CD4-positive, alpha-beta memory T cell (primary cell): ENCODE measurements at regions of chr6 and their contacts with region 1.

Region 1: GRCh38 chr6:26568601-26569432 is 27.9 kb upstream of the ABT1 start:
- DNase-seq: peak; percentile 96 to 98 (median 97)
- H3K4me3 ChIP-seq: peak overlapping the region; percentile 74 to 82
- H3K4me3 Mint-ChIP-seq: peak overlapping the region; percentile 94 to 99 (median 96)
- H3K27ac ChIP-seq: peak overlapping the region; percentile 62
- H3K27ac Mint-ChIP-seq: peak overlapping the region; percentile 92 to 100 (median 98)
- H3K4me1 ChIP-seq: peaks cover 9% of the 10 kb centered on the region
- H3K4me1 Mint-ChIP-seq: peaks cover 17 to 34% (median 23%) of the 10 kb centered on the region in 4 donors
- H3K27me3 ChIP-seq: no peaks in the 10 kb centered on the region
- H3K27me3 Mint-ChIP-seq: peaks cover 0 to 10% of the 10 kb centered on the region in 2 donors

Region 2: GRCh38 chr6:26175428-26176181 is 393.2 kb before region 1 on chr6:
- CTCF ChIA-PET with region 1: interaction called, 8 read pairs
- POLR2A ChIA-PET with region 1: interaction called, 11 read pairs
- intact Hi-C with region 1: loop called (anchors 2 kb)
- DNase-seq: peak; percentile 50 to 73 (median 70)
- H3K4me3 ChIP-seq: no peak overlapping the region
- H3K4me3 Mint-ChIP-seq: peak overlapping the region in 4 of 8 donors; percentile 37 to 70 (median 65)
- H3K27ac ChIP-seq: no peak overlapping the region
- H3K27ac Mint-ChIP-seq: peak overlapping the region; percentile 28 to 89 (median 78)
- H3K4me1 ChIP-seq: peaks cover 37% of the 10 kb centered on the region
- H3K4me1 Mint-ChIP-seq: peaks cover 21 to 40% (median 27%) of the 10 kb centered on the region in 4 donors
- H3K27me3 ChIP-seq: no peaks in the 10 kb centered on the region
- H3K27me3 Mint-ChIP-seq: no peaks in the 10 kb centered on the region

Region 3: DNA sequence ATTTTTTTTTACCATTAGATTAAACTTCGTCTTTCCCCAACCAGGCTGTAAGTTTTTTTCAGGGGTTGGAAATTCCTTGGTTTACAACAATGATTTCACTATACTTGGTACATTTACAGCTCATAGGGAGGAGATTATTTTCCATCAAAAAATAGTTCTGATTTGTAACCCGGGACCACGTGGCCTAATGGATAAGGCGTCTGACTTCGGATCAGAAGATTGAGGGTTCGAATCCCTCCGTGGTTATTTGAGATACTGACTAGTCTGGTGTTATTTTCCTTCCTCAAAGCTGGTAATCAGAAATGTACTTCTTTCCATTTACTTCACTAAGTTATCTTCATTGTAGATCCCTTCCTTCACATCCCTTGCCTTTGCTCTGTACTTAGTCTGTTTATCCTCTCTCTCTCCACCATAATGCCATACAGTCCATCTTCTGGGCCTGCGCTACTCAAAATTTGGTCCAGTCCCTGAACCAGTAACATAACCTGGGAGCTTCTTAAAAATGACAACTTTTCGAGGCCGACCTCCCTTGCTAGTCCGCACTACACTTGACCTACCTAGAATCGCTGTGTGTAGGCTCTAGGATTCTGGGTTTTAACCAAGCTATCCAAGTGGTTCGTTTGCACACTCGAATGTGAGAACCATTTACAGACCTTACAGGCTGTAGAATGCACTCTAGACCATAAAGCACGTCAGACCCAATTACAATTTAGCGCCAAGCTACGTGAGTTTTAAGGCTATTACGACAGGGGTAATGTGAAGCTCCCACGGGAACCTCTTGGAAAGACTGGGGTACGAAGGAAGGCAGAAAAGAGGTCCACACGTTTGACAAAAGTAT is 246.0 kb before region 1 on chr6:
- CTCF ChIA-PET with region 1: interaction called, 8 read pairs
- POLR2A ChIA-PET with region 1: interaction called, 17 read pairs
- intact Hi-C with region 1: no loop called
- DNase-seq: peak; percentile 75 to 80 (median 79)
- H3K4me3 ChIP-seq: peak overlapping the region in 1 of 2 donors; percentile 62
- H3K4me3 Mint-ChIP-seq: peak overlapping the region; percentile 86 to 92 (median 88)
- H3K27ac ChIP-seq: no peak overlapping the region
- H3K27ac Mint-ChIP-seq: peak overlapping the region; percentile 42 to 98 (median 82)
- H3K4me1 ChIP-seq: peaks cover 12% of the 10 kb centered on the region
- H3K4me1 Mint-ChIP-seq: peaks cover 19 to 30% (median 24%) of the 10 kb centered on the region in 4 donors
- H3K27me3 ChIP-seq: no peaks in the 10 kb centered on the region
- H3K27me3 Mint-ChIP-seq: peaks cover 8 to 22% of the 10 kb centered on the region in 2 donors

Region 4: DNA sequence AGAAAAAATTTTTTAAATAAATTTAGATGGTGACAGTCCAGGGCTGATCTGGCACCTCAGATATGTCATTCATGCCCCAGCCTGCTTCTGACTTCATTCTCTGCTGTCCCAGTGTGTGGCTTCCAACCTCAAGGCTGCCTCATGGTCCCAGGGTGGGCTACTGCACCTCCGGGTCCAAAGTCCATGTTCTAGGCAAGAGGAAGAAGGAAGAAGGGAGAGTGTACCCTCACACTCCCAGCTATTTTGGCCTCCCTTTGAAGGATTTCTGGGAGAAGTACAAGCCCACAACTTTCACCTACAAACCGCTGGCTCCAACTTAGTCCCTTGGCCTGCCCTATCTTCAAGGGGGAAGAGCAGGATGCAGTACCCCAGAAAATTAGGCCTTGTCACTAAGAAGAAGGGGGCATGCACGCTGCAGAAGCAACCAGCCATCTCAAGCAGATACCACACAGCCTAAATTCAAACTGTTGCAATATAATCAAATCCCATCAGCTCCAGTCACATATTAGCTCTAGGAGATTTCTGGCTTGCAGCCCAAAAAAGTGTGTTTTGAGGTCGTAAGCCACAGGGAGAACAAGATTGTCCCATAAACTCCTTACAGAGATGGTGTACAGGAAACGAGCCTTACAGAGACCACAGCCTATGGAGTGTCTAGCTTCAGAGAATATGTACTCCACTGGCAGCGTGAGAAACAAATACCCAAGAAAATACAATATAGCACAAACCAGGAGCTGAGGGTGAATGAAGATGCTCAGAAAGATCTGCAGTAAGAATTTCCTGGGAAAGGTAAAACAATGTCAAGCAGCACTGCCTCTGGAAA is 204.7 kb before region 1 on chr6:
- CTCF ChIA-PET with region 1: interaction called, 4 read pairs
- POLR2A ChIA-PET with region 1: no interaction called
- intact Hi-C with region 1: loop called (anchors 1 kb)
- DNase-seq: peak in 3 of 5 donors; percentile 40 to 44 (median 43)
- H3K4me3 ChIP-seq: peak overlapping the region; percentile 79 to 87
- H3K4me3 Mint-ChIP-seq: peak overlapping the region in 1 of 8 donors; percentile 21
- H3K27ac ChIP-seq: peak overlapping the region; percentile 96
- H3K27ac Mint-ChIP-seq: no peak overlapping the region
- H3K4me1 ChIP-seq: peaks cover 69% of the 10 kb centered on the region
- H3K4me1 Mint-ChIP-seq: peaks cover 45 to 56% (median 52%) of the 10 kb centered on the region in 4 donors
- H3K27me3 ChIP-seq: no peaks in the 10 kb centered on the region
- H3K27me3 Mint-ChIP-seq: no peaks in the 10 kb centered on the region

Region 5: DNA sequence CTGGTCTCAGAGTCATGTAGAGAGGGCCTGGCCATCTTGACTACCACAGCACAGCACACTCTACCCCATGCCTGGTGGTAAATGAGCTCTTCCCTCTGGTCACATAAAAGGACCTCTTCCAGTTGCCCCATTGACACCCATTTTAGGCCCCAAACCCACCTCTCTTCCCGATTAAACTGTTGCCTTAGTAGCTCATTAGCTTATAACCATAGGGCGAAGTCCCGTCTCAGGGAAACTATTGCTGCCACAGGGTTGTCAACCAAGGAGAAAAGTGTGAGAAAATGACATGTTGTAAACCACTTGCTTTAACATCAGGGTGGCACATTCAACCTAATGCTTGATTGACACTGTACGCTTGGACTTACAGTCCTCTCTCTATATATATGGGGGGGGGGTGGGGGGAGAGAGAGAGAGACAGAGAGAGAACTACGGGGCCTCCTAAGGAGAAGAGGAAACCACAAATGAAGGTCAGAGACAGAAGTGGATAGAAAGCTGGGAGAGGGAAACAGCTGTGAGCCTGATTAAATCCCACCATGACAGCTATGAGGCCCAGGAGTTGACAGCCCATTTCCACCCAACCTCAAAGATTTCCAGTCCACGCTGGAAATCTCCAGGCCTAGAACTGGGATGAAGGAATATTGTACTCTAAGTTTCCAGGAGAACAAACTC is 83.6 kb before region 1 on chr6:
- CTCF ChIA-PET with region 1: no interaction called
- POLR2A ChIA-PET with region 1: no interaction called
- intact Hi-C with region 1: no loop called
- DNase-seq: no peak
- H3K4me3 ChIP-seq: no peak overlapping the region
- H3K4me3 Mint-ChIP-seq: no peak overlapping the region
- H3K27ac ChIP-seq: no peak overlapping the region
- H3K27ac Mint-ChIP-seq: no peak overlapping the region
- H3K4me1 ChIP-seq: no peaks in the 10 kb centered on the region
- H3K4me1 Mint-ChIP-seq: peaks cover 0 to 3% (median 0%) of the 10 kb centered on the region in 4 donors
- H3K27me3 ChIP-seq: no peaks in the 10 kb centered on the region
- H3K27me3 Mint-ChIP-seq: no peaks in the 10 kb centered on the region

Region 6: DNA sequence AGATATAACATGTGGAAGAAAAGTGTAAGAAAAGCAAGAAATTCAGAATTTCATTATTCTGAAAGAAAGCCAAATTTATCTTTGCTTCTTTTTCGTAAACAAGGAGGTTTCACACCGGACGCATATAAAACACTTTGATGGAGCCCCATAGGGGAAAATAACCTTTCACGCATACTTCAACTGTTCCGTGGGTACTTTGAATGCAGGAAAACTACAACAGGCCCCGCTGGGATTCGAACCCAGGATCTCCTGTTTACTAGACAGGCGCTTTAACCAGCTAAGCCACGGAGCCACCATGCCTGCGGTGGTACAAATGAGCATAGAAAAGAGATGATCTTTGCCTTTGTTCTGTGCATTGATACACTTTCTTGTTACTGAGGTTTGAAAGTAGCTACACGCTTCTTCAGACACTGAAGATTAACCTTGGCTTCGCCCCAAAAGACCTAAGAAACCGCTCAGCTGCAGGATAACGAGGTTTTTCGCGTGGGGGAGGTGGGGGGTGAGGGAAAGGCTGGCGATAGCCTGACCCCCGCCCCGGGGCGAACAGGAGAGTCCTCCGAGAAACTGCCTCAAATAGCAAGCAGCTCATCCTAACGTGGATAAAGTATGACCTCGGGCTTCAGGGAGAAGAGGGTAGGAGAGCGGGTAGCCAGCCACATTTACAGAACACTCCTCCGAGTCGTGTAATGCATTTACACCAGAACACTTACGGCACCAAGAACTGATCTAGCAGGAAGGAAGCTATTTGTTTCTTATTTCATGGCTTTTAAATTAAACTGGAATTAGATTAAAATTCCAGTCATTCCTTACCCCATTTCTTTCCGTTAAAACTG is 35.9 kb before region 1 on chr6:
- CTCF ChIA-PET with region 1: interaction called, 14 read pairs
- POLR2A ChIA-PET with region 1: interaction called, 80 read pairs
- intact Hi-C with region 1: loop called (anchors 1 kb)
- DNase-seq: peak; percentile 90 to 94 (median 91)
- H3K4me3 ChIP-seq: peak overlapping the region; percentile 86 to 93
- H3K4me3 Mint-ChIP-seq: peak overlapping the region; percentile 94 to 99 (median 96)
- H3K27ac ChIP-seq: peak overlapping the region; percentile 74
- H3K27ac Mint-ChIP-seq: peak overlapping the region; percentile 91 to 99 (median 96)
- H3K4me1 ChIP-seq: peaks cover 41% of the 10 kb centered on the region
- H3K4me1 Mint-ChIP-seq: peaks cover 33 to 51% (median 40%) of the 10 kb centered on the region in 4 donors
- H3K27me3 ChIP-seq: no peaks in the 10 kb centered on the region
- H3K27me3 Mint-ChIP-seq: peaks cover 6 to 9% of the 10 kb centered on the region in 2 donors

Region 7: GRCh38 chr6:26596579-26597388 is 28.0 kb after region 1 on chr6 and contains the start of gene ABT1:
- CTCF ChIA-PET with region 1: interaction called, 116 read pairs
- POLR2A ChIA-PET with region 1: interaction called, 14 read pairs
- intact Hi-C with region 1: loop called (anchors 1 kb)
- DNase-seq: peak; percentile 95 to 98 (median 96)
- H3K4me3 ChIP-seq: peak within 1 kb of the TSS; percentile 76 to 98
- H3K4me3 Mint-ChIP-seq: no peak within 1 kb of the TSS
- H3K27ac ChIP-seq: peak within 1 kb of the TSS; percentile 91
- H3K27ac Mint-ChIP-seq: peak within 1 kb of the TSS in 3 of 7 donors; percentile 80 to 92 (median 88)
- H3K4me1 ChIP-seq: peaks cover 24% of the 10 kb centered on the region
- H3K4me1 Mint-ChIP-seq: peaks cover 0 to 16% (median 8%) of the 10 kb centered on the region in 4 donors
- H3K27me3 ChIP-seq: no peaks in the 10 kb centered on the region
- H3K27me3 Mint-ChIP-seq: peaks cover 15 to 22% of the 10 kb centered on the region in 2 donors
- total RNA-seq, gene ABT1: 33.5 to 34.8 TPM